ENCODE measurements at regions of chr9 and their contacts with region 1.

Region 1: DNA sequence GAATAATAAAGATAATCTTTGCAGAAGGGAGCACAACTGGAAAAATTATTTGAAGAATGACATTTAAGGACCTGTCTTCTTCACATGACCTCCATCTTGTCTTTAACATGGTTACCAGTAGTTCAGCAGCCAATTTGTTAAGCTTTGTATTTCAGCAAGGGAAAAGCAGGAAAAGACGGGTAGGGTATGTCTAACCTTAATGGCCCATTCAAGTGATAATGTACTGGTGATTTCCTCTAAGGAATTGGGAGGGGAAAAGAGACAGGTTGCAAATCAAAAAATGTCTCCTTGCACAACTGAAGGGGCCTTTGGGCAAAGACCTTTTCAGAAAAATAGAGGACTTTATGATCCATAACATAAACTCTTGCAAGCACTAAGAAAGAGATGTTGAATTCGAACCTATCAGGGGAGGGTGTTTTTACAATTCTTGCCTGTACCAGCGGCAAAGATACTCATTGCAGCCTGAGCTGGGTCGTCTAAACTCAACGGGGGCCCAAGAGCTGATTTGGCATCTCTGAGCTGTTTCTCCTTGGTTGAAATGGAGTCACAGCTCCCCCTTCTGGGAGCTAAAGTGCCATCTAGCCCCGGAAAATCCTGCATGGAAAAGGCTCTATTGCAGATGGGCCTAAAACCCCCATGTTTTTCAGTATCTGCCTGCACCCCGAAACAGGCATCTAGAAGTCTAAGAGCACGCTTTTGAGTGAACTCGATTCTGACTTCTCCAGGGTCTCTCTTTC is 3.8 kb downstream of the BRINP1 start:
- DNase-seq: peak; percentile 82
- ATAC-seq: peak; percentile 52
- H3K4me3 Mint-ChIP-seq: peak overlapping the region; percentile 43
- H3K27ac Mint-ChIP-seq: no peak overlapping the region
- H3K4me1 Mint-ChIP-seq: peaks cover 72% of the 10 kb centered on the region
- H3K27me3 Mint-ChIP-seq: peaks cover 52% of the 10 kb centered on the region
- CTCF ChIP-seq: peak; percentile 68

Region 2: DNA sequence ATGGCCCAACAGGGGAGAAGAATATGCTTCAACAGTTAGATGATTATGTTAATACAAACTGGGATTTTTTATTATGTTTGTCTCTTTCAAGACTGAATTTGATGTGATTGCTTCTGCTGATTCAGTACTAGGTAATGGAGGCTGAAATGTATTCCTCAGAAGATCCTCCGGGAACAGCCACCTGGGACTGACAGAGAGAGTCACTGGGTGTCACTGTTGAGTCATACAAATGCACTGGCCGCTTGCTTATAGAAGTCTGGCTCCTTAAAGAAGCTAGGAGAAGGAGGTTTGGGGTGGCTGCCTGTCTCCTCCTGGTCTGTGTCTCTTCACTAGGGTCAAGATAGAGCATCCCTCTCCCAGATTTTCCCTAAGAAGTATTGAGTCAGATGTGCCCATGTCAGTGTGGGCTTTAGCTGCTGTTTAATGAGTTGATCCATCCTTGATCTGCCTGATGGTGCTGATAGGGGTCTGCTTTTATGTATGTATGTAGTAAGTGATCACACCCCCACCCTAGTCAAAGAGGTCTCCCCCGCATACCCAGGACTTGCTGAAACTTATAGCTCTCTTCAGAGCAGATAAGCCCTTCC is 769.6 kb before region 1 on chr9:
- CTCF ChIA-PET with region 1: interaction called, 15 read pairs
- POLR2A ChIA-PET with region 1: no interaction called
- DNase-seq: peak; percentile 59
- ATAC-seq: peak; percentile 99
- H3K4me3 Mint-ChIP-seq: no peak overlapping the region
- H3K27ac Mint-ChIP-seq: no peak overlapping the region
- H3K4me1 Mint-ChIP-seq: peaks cover 14% of the 10 kb centered on the region
- H3K27me3 Mint-ChIP-seq: no peaks in the 10 kb centered on the region
- CTCF ChIP-seq: 0 out of 2 replicates have a peak, but pooled peaks have one; percentile 16

Region 3: DNA sequence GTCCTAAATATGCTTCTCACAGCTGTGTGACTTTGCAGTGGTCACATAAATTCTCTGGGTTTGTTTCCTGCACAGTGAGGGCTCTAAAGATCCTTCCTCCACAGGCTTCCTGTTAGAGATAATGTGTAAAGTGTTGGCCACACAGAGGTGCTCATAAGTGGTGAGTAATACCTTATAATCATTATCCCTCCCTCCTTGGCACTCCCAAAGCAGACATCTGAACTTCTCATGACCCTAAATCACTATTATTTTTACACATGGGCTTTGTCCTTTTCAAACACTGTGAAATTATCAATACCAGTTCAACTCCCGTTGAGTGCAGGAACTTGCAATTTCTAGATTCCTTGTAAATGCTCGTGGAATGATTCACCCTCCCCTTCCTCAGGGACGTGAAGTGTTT is 96.5 kb before region 1 on chr9:
- CTCF ChIA-PET with region 1: no interaction called
- POLR2A ChIA-PET with region 1: no interaction called
- DNase-seq: no peak
- ATAC-seq: no peak
- H3K4me3 Mint-ChIP-seq: no peak overlapping the region
- H3K27ac Mint-ChIP-seq: no peak overlapping the region
- H3K4me1 Mint-ChIP-seq: peaks cover 40% of the 10 kb centered on the region
- H3K27me3 Mint-ChIP-seq: no peaks in the 10 kb centered on the region
- CTCF ChIP-seq: no peak

Region 4: DNA sequence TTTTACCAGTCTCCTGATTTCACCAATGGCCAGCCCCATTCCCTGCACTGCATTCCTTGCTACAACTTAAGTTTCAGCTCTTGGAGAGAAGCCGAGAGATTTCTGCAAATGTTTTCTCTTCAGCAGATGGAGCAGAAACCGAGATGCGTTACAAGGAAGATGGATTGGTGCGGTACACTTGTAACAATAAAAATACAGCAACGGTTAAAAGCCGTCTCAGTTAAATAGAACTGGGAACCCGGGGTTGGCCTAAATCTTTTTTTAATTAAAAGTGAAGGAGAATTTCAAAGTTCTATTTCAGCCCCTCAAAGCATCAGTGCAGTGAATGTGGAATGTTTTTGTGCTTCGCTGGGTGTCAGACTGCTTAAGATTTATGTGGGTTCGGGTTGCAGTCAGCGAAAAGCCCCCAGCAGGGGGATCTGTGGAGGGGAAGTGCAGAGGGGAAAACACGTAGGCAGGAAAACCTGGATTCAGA is 16.1 kb before region 1 on chr9:
- CTCF ChIA-PET with region 1: interaction called, 12 read pairs
- POLR2A ChIA-PET with region 1: no interaction called
- DNase-seq: peak; percentile 61
- ATAC-seq: peak; percentile 88
- H3K4me3 Mint-ChIP-seq: peak overlapping the region; percentile 35; the same call in 1 of the 2 replicates
- H3K27ac Mint-ChIP-seq: 0 out of 2 replicates have a peak overlapping the region, but pooled peaks have one; percentile 6
- H3K4me1 Mint-ChIP-seq: peaks cover 67% of the 10 kb centered on the region
- H3K27me3 Mint-ChIP-seq: no peaks in the 10 kb centered on the region; the same call in 1 of the 2 replicates
- CTCF ChIP-seq: no peak